Thyroid gland (tissue), 4 donors: ENCODE measurements at regions of chr17 and their contacts with region 1.

Region 1: GRCh38 chr17:81222906-81223761 is at the start of gene CEP131:
- DNase-seq: peak; percentile 99
- H3K4me3 ChIP-seq: peak within 1 kb of the TSS in 2 of 3 donors; percentile 58 to 62
- H3K27ac ChIP-seq: no peak within 1 kb of the TSS
- H3K4me1 ChIP-seq: peaks cover 12 to 16% of the 10 kb centered on the region in 2 donors
- H3K27me3 ChIP-seq: no peaks in the 10 kb centered on the region
- CTCF ChIP-seq: no peak
- POLR2A ChIP-seq: peak in 1 of 2 donors; percentile 39
- total RNA-seq, gene CEP131: 6.9 to 12.0 (median 8.6) TPM

Region 2: GRCh38 chr17:81034779-81035388 is 188.2 kb before region 1 on chr17 and contains the start of gene BAIAP2:
- intact Hi-C with region 1: loop called (anchors 10 kb)
- DNase-seq: peak; percentile 95 to 97
- H3K4me3 ChIP-seq: peak within 1 kb of the TSS; percentile 29 to 68 (median 64)
- H3K27ac ChIP-seq: peak within 1 kb of the TSS in 2 of 3 donors; percentile 85 to 86
- H3K4me1 ChIP-seq: peaks cover 42 to 53% of the 10 kb centered on the region in 2 donors
- H3K27me3 ChIP-seq: no peaks in the 10 kb centered on the region
- CTCF ChIP-seq: no peak
- POLR2A ChIP-seq: peak; percentile 95 to 97
- total RNA-seq, gene BAIAP2: 35.8 to 86.8 (median 42.1) TPM

Region 3: GRCh38 chr17:81277421-81277820 is 54.3 kb after region 1 on chr17:
- intact Hi-C with region 1: no loop called
- DNase-seq: peak; percentile 94 to 96
- H3K4me3 ChIP-seq: no peak overlapping the region
- H3K27ac ChIP-seq: peak overlapping the region in 2 of 3 donors; percentile 22 to 31
- H3K4me1 ChIP-seq: peaks cover 14 to 22% of the 10 kb centered on the region in 2 donors
- H3K27me3 ChIP-seq: no peaks in the 10 kb centered on the region
- CTCF ChIP-seq: no peak
- POLR2A ChIP-seq: no peak

Region 4: DNA sequence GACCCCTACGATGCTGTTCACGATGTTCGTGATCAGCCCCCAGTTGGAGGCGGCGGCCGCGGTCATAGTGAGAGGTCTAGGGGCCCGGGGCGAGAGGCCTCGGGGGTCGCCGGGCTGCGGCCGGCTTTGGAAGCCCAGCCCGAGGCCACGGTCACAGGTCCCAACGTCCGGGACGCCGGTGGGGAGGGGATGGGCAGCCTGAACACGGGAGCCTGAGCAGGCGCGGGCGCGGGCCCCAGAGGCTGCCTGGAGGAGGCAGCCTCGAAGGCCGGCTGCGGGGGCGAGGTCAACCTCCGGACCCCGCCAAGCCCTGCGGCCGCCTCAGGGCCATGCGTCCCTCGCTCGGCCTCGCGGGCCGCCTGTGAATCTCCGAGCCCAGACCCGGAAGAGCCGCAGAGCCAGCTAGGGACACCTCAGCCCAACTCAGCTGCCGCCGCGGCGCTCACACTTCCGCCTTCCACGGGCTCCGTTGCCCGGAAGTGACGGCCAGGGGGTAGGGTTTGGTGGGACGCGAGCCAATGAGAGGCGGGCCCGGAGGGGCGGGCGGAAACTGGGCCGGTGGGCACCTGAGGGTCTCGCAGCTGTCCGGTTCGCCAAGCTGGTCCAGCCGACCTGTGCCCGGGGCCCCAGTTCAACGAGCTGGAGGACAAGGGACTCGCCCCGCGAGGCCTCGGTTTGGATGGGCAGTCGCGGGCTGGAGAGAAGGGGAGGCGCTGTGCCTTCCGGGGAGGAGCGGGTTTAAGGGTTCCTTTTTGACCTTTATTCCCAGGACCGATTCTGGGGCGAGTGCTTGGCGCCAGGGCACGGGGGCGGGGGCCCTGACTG is 71.9 kb after region 1 on chr17 and contains the start of gene SLC38A10:
- intact Hi-C with region 1: no loop called
- DNase-seq: peak; percentile 89 to 93
- H3K4me3 ChIP-seq: peak within 1 kb of the TSS; percentile 91 to 99 (median 97)
- H3K27ac ChIP-seq: peak within 1 kb of the TSS; percentile 90 to 97 (median 94)
- H3K4me1 ChIP-seq: peaks cover 18 to 33% of the 10 kb centered on the region in 2 donors
- H3K27me3 ChIP-seq: no peaks in the 10 kb centered on the region
- CTCF ChIP-seq: no peak
- POLR2A ChIP-seq: peak; percentile 81 to 95
- total RNA-seq, gene SLC38A10: 81.8 to 140 (median 121) TPM

Region 5: DNA sequence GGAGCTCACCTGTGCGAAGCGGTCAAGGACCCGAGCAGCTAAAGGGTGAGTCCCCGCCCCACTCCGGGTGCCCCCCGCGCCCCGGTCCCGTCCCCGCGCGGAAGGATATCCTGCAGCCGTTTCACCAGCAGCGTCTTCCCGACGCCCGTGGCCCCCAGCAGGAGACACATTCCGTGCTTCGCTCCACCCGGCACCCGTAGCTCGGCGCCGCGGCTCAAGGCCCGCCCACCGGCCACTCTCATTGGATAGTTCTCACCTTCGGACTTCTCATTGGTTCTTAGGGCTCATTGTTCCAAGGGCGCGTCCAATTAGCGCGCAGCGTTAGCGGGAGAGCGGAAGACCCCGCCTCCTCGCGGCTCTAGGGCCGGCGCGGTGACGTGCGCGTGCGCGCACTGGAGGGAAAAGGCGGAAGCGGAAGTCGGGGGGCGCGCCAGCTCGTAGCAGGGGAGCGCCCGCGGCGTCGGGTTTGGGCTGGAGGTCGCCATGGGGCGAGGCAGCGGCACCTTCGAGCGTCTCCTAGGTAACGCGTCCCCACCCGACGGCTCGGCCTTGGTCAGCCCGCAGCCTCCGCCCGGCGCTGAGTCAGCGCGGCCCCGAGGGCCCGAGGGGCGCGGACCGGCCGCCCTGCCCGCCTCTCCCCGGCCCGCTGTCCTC is 460.6 kb after region 1 on chr17 and contains the starts of genes ARL16 and HGS:
- intact Hi-C with region 1: no loop called
- DNase-seq: peak; percentile 97 to 98
- H3K4me3 ChIP-seq: peak within 1 kb of the TSS; percentile 44 to 81 (median 72)
- H3K27ac ChIP-seq: peak within 1 kb of the TSS in 2 of 3 donors; percentile 55 to 88
- H3K4me1 ChIP-seq: peaks cover 19 to 26% of the 10 kb centered on the region in 2 donors
- H3K27me3 ChIP-seq: no peaks in the 10 kb centered on the region
- CTCF ChIP-seq: no peak
- POLR2A ChIP-seq: peak in 1 of 2 donors; percentile 71
- total RNA-seq, gene ARL16: 29.7 to 46.5 (median 37.2) TPM
- total RNA-seq, gene HGS: 62.9 to 98.3 (median 67.3) TPM